Activated naive CD8-positive, alpha-beta T cell treated with anti-CD3 and anti-CD28 coated beads, Interleukin-2, amount 10 ng/mL, durations not matched to agents 7 days and 5 days (primary cell): ENCODE measurements at regions of chr2 and their contacts with region 1.

Region 1: GRCh38 chr2:233267516-233268245 is 16.2 kb downstream of the ATG16L1 start:
- DNase-seq: peak; percentile 79
- ATAC-seq: peak; percentile 96
- H3K4me3 Mint-ChIP-seq: peak overlapping the region; percentile 74
- H3K27ac Mint-ChIP-seq: peak overlapping the region; percentile 95
- H3K4me1 Mint-ChIP-seq: peaks cover 63% of the 10 kb centered on the region
- H3K27me3 Mint-ChIP-seq: no peaks in the 10 kb centered on the region

Region 2: GRCh38 chr2:233061591-233062450 is 205.9 kb before region 1 on chr2:
- POLR2A ChIA-PET with region 1: interaction called, 14 read pairs
- DNase-seq: peak; percentile 65
- ATAC-seq: peak; percentile 10
- H3K4me3 Mint-ChIP-seq: peak overlapping the region; percentile 98
- H3K27ac Mint-ChIP-seq: peak overlapping the region; percentile 99
- H3K4me1 Mint-ChIP-seq: peaks cover 31% of the 10 kb centered on the region
- H3K27me3 Mint-ChIP-seq: no peaks in the 10 kb centered on the region

Region 3: GRCh38 chr2:233251306-233252116 is 16.2 kb before region 1 on chr2 and contains the start of gene ATG16L1:
- POLR2A ChIA-PET with region 1: interaction called, 36 read pairs
- DNase-seq: peak; percentile 96
- ATAC-seq: peak; percentile 97
- H3K4me3 Mint-ChIP-seq: peak within 1 kb of the TSS; percentile 87
- H3K27ac Mint-ChIP-seq: peak within 1 kb of the TSS; percentile 95
- H3K4me1 Mint-ChIP-seq: peaks cover 56% of the 10 kb centered on the region
- H3K27me3 Mint-ChIP-seq: no peaks in the 10 kb centered on the region
- total RNA-seq, gene ATG16L1: 60.8 to 67.6 TPM

Region 4: DNA sequence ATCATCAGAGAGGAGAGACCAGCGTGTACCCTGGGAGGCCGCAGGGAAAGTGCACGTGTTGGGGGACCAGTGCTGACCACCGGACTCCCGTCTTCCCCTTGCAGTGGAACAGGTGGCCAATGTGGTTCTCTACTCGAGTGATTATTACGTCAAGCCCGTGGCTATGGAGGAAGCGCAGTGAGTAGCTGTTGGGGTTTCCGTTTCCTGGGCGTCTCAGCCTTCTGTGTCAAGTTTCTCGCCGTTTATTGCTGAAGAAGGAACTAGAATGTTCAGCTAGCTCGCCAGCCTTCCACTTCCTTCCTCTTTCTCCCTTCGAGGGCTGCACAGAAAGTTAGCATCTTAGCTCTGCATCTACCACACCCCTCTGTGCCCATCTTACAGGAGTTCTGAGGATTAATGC is 63.9 kb after region 1 on chr2:
- POLR2A ChIA-PET with region 1: interaction called, 21 read pairs
- DNase-seq: peak; percentile 67
- ATAC-seq: peak; percentile 94
- H3K4me3 Mint-ChIP-seq: peak overlapping the region; percentile 80
- H3K27ac Mint-ChIP-seq: peak overlapping the region; percentile 99
- H3K4me1 Mint-ChIP-seq: peaks cover 41% of the 10 kb centered on the region
- H3K27me3 Mint-ChIP-seq: peaks cover 3% of the 10 kb centered on the region

Region 5: GRCh38 chr2:233353769-233354499 is 86.3 kb after region 1 on chr2 and contains the start of gene DGKD:
- POLR2A ChIA-PET with region 1: interaction called, 15 read pairs
- DNase-seq: peak; percentile 87
- ATAC-seq: peak; percentile 65
- H3K4me3 Mint-ChIP-seq: peak within 1 kb of the TSS; percentile 87
- H3K27ac Mint-ChIP-seq: peak within 1 kb of the TSS; percentile 93
- H3K4me1 Mint-ChIP-seq: peaks cover 64% of the 10 kb centered on the region
- H3K27me3 Mint-ChIP-seq: no peaks in the 10 kb centered on the region
- total RNA-seq, gene DGKD: 114 to 132 TPM

Region 6: DNA sequence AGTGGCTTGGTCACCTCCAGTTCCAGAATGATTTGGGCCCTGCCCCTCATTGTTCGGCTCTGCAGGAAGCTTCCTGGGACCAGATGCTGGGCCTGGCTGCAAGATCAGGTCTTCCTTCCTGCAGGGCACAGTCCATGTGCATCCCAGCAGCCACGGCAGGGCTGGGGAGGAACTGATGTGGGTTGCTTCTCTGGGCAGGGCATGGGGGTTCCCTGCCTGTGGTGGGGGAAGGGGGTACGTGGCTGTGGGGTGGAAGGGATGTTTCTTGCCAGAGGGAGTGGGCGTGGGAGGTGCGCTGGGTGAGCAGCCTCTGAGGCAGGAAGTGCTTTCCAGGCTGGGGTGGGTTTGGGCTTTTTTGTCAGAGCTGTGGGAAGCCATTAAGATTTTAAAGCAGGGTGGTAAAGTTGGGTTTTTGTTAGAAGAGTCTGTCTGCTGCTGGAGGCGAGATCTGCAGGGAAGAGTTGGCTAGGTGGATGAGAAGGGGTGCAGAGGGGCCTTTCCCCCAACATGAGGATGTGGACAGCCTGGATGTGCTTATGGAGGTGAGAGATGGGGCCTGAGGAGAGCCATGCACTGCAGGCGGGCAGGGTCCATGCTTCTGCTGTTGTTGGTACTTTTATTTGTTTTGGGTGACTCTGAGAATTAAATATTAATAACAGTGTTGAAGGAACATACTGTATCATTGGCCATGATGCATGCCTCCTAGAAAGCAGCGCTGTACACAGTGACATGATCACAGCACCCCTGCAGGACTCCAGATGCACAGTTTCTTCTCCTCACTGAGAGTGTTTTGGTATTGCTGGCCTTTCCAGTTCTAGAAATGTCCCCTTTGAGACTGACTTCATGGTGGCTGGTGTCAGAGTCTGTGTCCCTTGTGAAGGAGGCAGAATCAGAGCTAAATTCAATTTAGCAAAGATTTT is 131.9 kb after region 1 on chr2:
- POLR2A ChIA-PET with region 1: interaction called, 10 read pairs
- DNase-seq: peak; percentile 62
- ATAC-seq: peak; percentile 55
- H3K4me3 Mint-ChIP-seq: peak overlapping the region; percentile 69
- H3K27ac Mint-ChIP-seq: peak overlapping the region; percentile 92
- H3K4me1 Mint-ChIP-seq: peaks cover 55% of the 10 kb centered on the region
- H3K27me3 Mint-ChIP-seq: no peaks in the 10 kb centered on the region